ENCODE measurements at regions of chr12 and their contacts with region 1.

Region 1: DNA sequence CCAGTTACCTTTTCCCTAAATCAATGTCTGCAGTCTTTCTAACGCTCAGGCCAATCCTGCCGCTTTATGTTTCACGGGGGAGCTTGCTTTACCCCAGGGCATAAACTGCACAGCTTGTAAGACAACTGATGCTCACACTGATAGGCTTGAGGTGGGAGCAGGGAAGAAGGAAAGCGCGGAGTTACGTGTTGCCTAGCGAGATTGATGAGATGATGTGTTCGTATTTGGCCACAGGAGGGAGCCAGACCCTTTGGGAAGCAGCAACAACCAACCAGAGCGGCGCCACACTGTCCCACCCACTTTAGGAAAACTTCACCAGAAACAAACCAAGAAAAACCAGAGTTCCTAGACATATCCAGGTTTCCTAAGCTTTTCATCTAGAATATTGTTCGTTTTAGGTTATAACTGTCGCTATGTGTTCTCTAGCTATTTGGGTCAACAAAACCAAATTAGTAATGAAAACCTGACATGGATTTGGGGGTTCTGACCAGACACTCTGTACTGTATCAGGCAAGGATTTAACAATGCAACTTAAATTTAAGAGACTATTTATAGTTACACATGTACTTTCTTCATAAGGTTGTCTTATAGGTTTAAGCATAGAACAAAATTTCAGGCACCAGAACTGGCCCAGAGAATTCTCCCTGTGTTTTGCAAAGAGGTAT is 2.4 kb downstream of the IL26 start:
- DNase-seq: peak; percentile 63 to 81 (median 70)
- ATAC-seq: peak; percentile 99 to 100 (median 100)
- H3K4me3 ChIP-seq: no peak overlapping the region
- H3K27ac ChIP-seq: no peak overlapping the region
- H3K4me1 ChIP-seq: no peaks in the 10 kb centered on the region
- H3K27me3 ChIP-seq: peaks cover 0 to 4% (median under 1%) of the 10 kb centered on the region in 4 donors
- CTCF ChIP-seq: peak; percentile 65 to 76 (median 73)

Region 2: GRCh38 chr12:67977668-67978067 is 245.5 kb before region 1 on chr12:
- intact Hi-C with region 1: no loop called
- DNase-seq: no peak
- ATAC-seq: no peak
- H3K4me3 ChIP-seq: no peak overlapping the region
- H3K27ac ChIP-seq: no peak overlapping the region
- H3K4me1 ChIP-seq: no peaks in the 10 kb centered on the region
- H3K27me3 ChIP-seq: no peaks in the 10 kb centered on the region
- CTCF ChIP-seq: no peak

Region 3: DNA sequence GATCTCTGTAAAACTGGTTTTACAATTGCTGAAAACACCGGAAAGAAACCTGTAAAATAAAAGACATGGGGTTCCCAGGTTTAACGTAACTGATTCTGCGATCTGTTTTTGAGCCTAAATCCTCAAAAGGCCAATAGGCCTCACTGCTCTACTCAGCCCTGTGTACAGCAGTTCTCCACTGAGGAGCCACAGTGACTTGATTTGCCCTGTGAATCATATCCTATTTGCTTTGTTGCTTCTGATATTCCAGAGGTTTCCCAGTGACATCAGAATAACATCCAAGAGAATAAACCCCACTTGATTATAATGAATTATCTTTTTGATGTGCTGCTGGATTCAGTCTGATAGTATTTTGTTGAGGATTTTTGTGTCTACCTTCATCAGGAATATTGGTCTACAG is 81.4 kb after region 1 on chr12:
- intact Hi-C with region 1: loop called in 1 of 3 experiments (anchors 5 kb)
- DNase-seq: no peak
- ATAC-seq: no peak
- H3K4me3 ChIP-seq: no peak overlapping the region
- H3K27ac ChIP-seq: no peak overlapping the region
- H3K4me1 ChIP-seq: no peaks in the 10 kb centered on the region
- H3K27me3 ChIP-seq: no peaks in the 10 kb centered on the region
- CTCF ChIP-seq: no peak

Region 4: DNA sequence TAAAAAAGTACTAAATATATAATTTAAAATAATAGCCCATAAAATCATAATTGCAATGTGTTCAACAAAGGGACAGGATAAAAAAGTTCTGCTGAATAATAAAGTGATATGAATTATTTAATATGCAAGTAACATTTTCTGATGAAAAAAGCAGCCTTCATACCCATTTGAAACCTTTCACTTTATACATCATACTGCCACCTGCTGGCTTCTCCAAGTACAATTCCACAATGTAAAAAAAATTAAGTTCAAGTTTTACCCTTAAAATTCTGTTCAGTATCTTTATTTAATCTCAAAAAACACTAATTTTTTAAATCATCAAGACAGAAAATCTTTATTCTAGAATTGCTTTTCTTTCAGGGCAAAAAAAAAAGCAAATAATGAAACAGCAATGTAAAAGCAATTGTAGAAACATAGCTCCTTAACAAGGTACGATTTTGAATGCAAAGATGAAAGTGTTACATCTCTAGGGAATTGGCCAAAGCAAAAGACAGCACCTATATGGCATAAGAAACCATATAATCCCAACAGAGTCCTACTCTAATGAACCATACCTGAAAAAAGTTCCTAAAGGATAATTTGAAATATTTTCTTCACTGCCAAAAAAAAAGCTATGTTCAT is 93.9 kb after region 1 on chr12:
- intact Hi-C with region 1: loop called in 2 of 3 experiments (anchors 5 to 10 kb)
- DNase-seq: peak in 1 of 6 donors; percentile 38
- ATAC-seq: peak in 3 of 4 donors; percentile 44 to 64 (median 63)
- H3K4me3 ChIP-seq: no peak overlapping the region
- H3K27ac ChIP-seq: no peak overlapping the region
- H3K4me1 ChIP-seq: no peaks in the 10 kb centered on the region
- H3K27me3 ChIP-seq: no peaks in the 10 kb centered on the region
- CTCF ChIP-seq: peak; percentile 36 to 76 (median 56)